Vagina (tissue), 2 donors: ENCODE measurements at regions of chr2 and their contacts with region 1.

Region 1: GRCh38 chr2:241289597-241289996 is 25.9 kb downstream of the HDLBP start:
- DNase-seq: no peak
- H3K4me3 ChIP-seq: no peak overlapping the region
- H3K27ac ChIP-seq: no peak overlapping the region
- H3K4me1 ChIP-seq: peaks cover 29% of the 10 kb centered on the region
- H3K27me3 ChIP-seq: no peaks in the 10 kb centered on the region
- CTCF ChIP-seq: no peak
- POLR2A ChIP-seq: no peak

Region 2: GRCh38 chr2:241179899-241180298 is 109.7 kb before region 1 on chr2:
- intact Hi-C with region 1: loop called (anchors 5 kb)
- DNase-seq: no peak
- H3K4me3 ChIP-seq: no peak overlapping the region
- H3K27ac ChIP-seq: no peak overlapping the region
- H3K4me1 ChIP-seq: no peaks in the 10 kb centered on the region
- H3K27me3 ChIP-seq: no peaks in the 10 kb centered on the region
- CTCF ChIP-seq: no peak
- POLR2A ChIP-seq: no peak